WTC11 (cell line): ENCODE measurements at regions of chr13 and their contacts with region 1.

Region 1: DNA sequence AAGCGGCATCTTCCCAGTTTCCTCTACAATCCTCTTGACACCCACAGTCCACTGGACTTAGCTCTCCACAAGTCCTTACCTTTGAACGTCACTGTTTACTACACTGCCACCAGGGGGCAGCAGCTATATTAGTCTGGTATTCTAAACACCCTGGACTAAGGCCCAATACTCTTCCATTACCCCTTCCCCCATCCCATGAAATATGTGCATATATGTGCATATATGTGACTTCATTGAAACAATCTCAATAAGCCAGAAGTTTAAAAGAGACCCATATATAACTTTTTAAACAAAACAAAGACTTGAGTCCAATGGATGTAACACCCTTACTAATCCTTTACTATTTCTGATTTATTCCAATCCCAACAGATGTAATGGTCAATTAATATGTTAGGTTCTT is 15.5 kb downstream of the GGACT start:
- DNase-seq: peak; percentile 82
- ATAC-seq: peak; percentile 97
- H3K4me3 Mint-ChIP-seq: no peak overlapping the region
- H3K27ac Mint-ChIP-seq: no peak overlapping the region
- H3K4me1 Mint-ChIP-seq: peaks cover 9% of the 10 kb centered on the region
- H3K27me3 Mint-ChIP-seq: no peaks in the 10 kb centered on the region
- CTCF ChIP-seq: peak; percentile 82

Region 2: DNA sequence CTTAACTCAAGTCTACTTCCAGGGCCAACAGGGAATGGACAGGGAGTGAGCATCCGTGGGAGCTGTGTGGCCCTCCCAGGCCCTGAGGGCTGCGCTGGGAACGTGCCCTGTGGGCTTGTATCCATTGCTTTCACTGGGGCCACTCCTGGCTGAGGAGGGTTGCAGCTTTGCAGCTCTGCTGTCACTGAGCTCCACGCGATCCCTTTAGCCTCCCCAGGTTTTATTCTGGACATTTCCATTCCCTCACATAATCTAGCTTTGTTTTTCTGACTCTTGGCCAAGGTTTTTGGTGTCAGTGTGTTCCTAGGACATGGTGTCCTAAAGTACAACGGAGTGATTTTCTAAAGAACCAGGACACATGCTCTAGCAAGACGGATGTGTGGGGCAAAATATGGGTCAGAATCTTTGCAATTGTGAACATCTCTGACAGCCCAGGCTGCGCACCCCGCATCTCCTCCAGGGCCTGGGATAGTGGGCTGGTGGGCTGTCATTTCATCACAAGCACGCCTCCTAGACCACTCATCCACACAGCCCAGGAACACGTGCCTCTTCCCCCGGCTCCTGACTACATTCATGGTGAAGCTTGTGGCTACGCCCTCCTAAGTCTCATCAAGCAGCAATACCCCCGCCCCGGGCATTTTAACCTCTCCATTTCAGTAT is 12.5 kb before region 1 on chr13:
- CTCF ChIA-PET with region 1: interaction called, 24 read pairs
- POLR2A ChIA-PET with region 1: interaction called, 3 read pairs
- DNase-seq: no peak
- ATAC-seq: no peak
- H3K4me3 Mint-ChIP-seq: no peak overlapping the region
- H3K27ac Mint-ChIP-seq: no peak overlapping the region
- H3K4me1 Mint-ChIP-seq: peaks cover 3% of the 10 kb centered on the region; the same call in 1 of the 2 replicates
- H3K27me3 Mint-ChIP-seq: no peaks in the 10 kb centered on the region
- CTCF ChIP-seq: no peak

Region 3: GRCh38 chr13:100594731-100595130 is 21.6 kb after region 1 on chr13:
- CTCF ChIA-PET with region 1: interaction called, 18 read pairs
- POLR2A ChIA-PET with region 1: no interaction called
- DNase-seq: peak; percentile 63
- ATAC-seq: peak; percentile 86
- H3K4me3 Mint-ChIP-seq: no peak overlapping the region
- H3K27ac Mint-ChIP-seq: no peak overlapping the region
- H3K4me1 Mint-ChIP-seq: no peaks in the 10 kb centered on the region
- H3K27me3 Mint-ChIP-seq: peaks cover 8% of the 10 kb centered on the region
- CTCF ChIP-seq: peak; percentile 35; the same call in 1 of the 2 replicates